HEK293T (cell line): ENCODE measurements at regions of chr2 and their contacts with region 1.

Region 1: GRCh38 chr2:68943581-68944568 is 8.8 kb downstream of the GKN2 start:
- DNase-seq: peak; percentile 68

Region 2: DNA sequence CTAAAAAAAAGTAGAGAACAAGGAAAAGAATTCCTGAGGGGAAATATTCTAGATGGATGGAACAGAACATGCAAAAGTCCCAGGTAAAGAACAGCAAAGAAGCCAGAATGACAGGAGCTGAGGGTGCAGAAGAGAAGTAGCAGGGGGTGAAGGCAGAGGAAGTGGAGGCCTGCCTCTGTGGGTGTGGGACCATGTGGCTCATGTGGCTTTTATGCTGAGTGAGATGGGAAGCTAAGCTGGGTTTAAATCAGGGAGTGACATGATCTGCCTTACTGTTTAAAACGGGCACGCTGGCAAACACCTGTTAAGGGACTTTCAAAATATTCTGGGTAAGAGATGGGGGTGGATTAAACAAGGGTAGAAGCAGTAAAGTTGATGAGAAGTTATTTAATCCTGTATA is 31.1 kb before region 1 on chr2:
- CTCF ChIA-PET with region 1: no interaction called
- POLR2A ChIA-PET with region 1: no interaction called
- DNase-seq: no peak

Region 3: GRCh38 chr2:69214898-69215297 is 271.0 kb after region 1 on chr2:
- CTCF ChIA-PET with region 1: no interaction called
- POLR2A ChIA-PET with region 1: no interaction called
- DNase-seq: no peak

Region 4: GRCh38 chr2:69306822-69307578 is 363.1 kb after region 1 on chr2:
- CTCF ChIA-PET with region 1: interaction called, 12 read pairs
- POLR2A ChIA-PET with region 1: no interaction called
- DNase-seq: peak; percentile 89